ENCODE measurements at regions of chr5 and their contacts with region 1.

Region 1: GRCh38 chr5:101260714-101261256 is 357.7 kb upstream of the ST8SIA4 start:
- DNase-seq: no peak
- H3K4me3 Mint-ChIP-seq: no peak overlapping the region
- H3K27ac Mint-ChIP-seq: no peak overlapping the region
- H3K4me1 Mint-ChIP-seq: no peaks in the 10 kb centered on the region
- H3K27me3 Mint-ChIP-seq: no peaks in the 10 kb centered on the region

Region 2: GRCh38 chr5:101278011-101278687 is 17.4 kb after region 1 on chr5:
- intact Hi-C with region 1: loop called (anchors 2 kb)
- DNase-seq: no peak
- H3K4me3 Mint-ChIP-seq: no peak overlapping the region
- H3K27ac Mint-ChIP-seq: no peak overlapping the region
- H3K4me1 Mint-ChIP-seq: no peaks in the 10 kb centered on the region
- H3K27me3 Mint-ChIP-seq: no peaks in the 10 kb centered on the region